ENCODE measurements at regions of chr9 and their contacts with region 1.

Region 1: GRCh38 chr9:120928483-120929228 is 2.1 kb upstream of the TRAF1 start:
- DNase-seq: peak; percentile 77 to 86
- ATAC-seq: peak; percentile 28 to 71 (median 49)
- H3K4me3 ChIP-seq: peak overlapping the region; percentile 64
- H3K4me3 Mint-ChIP-seq: peak overlapping the region; percentile 90
- H3K27ac ChIP-seq: peak overlapping the region; percentile 97
- H3K27ac Mint-ChIP-seq: peak overlapping the region; percentile 98 to 99
- H3K4me1 ChIP-seq: peaks cover 87% of the 10 kb centered on the region
- H3K4me1 Mint-ChIP-seq: peaks cover 82 to 88% of the 10 kb centered on the region in 2 donors
- H3K27me3 ChIP-seq: no peaks in the 10 kb centered on the region
- H3K27me3 Mint-ChIP-seq: no peaks in the 10 kb centered on the region
- CTCF ChIP-seq: no peak

Region 2: DNA sequence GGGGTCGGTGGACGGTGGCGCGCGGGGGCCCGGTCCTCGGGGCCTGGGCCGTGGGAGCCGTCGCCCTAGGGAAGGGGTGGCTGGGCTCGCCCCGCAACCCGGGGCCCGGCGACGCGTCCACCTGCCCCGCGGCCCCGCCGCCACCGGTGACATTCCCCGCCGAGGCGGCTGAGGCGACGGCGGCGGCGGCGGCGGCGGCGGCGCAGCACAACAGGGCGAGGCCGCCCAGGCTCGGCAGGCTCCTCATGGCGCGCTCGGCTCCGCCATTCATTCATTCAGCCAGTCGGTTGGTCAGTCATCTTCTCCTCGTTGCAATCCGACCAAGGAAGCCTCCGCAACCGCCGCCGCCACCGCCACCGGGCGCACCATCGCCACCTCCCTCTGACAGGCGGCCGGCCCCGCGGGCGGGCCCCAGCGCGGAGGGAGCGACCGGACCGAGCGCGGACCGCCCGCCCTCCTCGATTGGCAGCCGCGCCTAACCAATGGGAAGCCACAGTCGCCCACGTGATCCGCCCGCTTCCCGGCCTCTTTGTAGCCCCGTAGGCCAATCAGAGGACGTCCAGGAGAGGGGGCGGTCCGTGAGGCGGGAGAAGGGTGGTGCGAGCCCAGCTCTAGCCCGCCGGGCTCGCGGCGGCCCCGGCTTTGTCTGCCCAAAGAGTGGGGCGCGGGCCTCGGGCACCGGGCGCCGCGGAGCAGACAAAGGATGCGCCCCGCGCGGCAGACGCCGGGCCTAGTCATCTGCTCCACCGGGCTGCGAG is 214.4 kb before region 1 on chr9 and contains the start of gene MEGF9:
- intact Hi-C with region 1: loop called (anchors 5 kb)
- DNase-seq: peak; percentile 97
- ATAC-seq: peak; percentile 90 to 98 (median 95)
- H3K4me3 ChIP-seq: peak within 1 kb of the TSS; percentile 67
- H3K4me3 Mint-ChIP-seq: peak within 1 kb of the TSS; percentile 95
- H3K27ac ChIP-seq: peak within 1 kb of the TSS; percentile 64
- H3K27ac Mint-ChIP-seq: peak within 1 kb of the TSS; percentile 90 to 94
- H3K4me1 ChIP-seq: peaks cover 29% of the 10 kb centered on the region
- H3K4me1 Mint-ChIP-seq: peaks cover 24 to 35% of the 10 kb centered on the region in 2 donors
- H3K27me3 ChIP-seq: no peaks in the 10 kb centered on the region
- H3K27me3 Mint-ChIP-seq: no peaks in the 10 kb centered on the region
- CTCF ChIP-seq: no peak
- total RNA-seq, gene MEGF9: 17.5 to 25.9 (median 22.3) TPM

Region 3: GRCh38 chr9:120842690-120843499 is 85.8 kb before region 1 on chr9 and contains the start of gene PSMD5:
- intact Hi-C with region 1: loop called (anchors 5 kb)
- DNase-seq: peak; percentile 92 to 98
- ATAC-seq: peak; percentile 95 to 99 (median 97)
- H3K4me3 ChIP-seq: peak within 1 kb of the TSS; percentile 85
- H3K4me3 Mint-ChIP-seq: peak within 1 kb of the TSS; percentile 99
- H3K27ac ChIP-seq: peak within 1 kb of the TSS; percentile 92
- H3K27ac Mint-ChIP-seq: peak within 1 kb of the TSS; percentile 98 to 99
- H3K4me1 ChIP-seq: peaks cover 28% of the 10 kb centered on the region
- H3K4me1 Mint-ChIP-seq: peaks cover 57 to 58% of the 10 kb centered on the region in 2 donors
- H3K27me3 ChIP-seq: no peaks in the 10 kb centered on the region
- H3K27me3 Mint-ChIP-seq: no peaks in the 10 kb centered on the region
- CTCF ChIP-seq: no peak
- total RNA-seq, gene PSMD5: 24.6 to 41.2 (median 37.1) TPM

Region 4: DNA sequence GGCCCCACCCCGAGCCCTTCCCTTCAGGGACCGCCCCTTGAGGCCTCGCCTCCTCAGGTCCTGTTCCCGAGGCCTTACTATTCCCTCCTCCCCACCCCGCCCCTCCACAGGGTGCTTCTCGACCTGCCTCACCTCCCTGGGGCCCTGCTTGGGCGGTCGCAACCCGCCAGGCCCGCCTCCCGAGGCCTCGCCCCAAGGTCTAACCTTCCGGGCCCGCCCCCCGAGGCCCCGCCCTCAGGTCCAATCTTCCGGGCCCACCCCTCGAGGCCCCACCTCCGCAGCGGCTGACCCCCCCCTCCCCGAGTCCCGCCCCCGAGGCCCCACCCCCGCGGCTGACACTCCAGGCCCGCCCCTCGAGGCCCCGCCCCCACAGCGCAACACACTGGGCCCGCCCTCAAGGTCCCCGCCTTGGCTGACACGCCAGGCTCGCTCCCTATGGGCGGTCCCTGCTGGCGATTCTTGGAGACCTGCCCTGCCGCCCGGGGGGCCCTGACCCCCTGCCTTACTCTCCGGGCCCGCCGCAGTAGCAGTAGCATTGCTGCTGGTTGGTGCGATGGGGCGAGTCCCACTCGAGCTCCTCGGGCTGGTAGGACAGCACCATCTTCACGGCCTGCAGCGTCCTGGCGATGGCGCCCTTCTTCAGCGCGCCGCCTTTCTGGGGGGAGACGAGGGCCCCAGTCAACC is 59.8 kb before region 1 on chr9:
- intact Hi-C with region 1: loop called (anchors 2 kb)
- DNase-seq: peak; percentile 93 to 96
- ATAC-seq: peak; percentile 81 to 93 (median 83)
- H3K4me3 ChIP-seq: peak overlapping the region; percentile 68
- H3K4me3 Mint-ChIP-seq: peak overlapping the region; percentile 94
- H3K27ac ChIP-seq: peak overlapping the region; percentile 78
- H3K27ac Mint-ChIP-seq: peak overlapping the region; percentile 92 to 94
- H3K4me1 ChIP-seq: peaks cover 16% of the 10 kb centered on the region
- H3K4me1 Mint-ChIP-seq: peaks cover 4 to 22% of the 10 kb centered on the region in 2 donors
- H3K27me3 ChIP-seq: no peaks in the 10 kb centered on the region
- H3K27me3 Mint-ChIP-seq: no peaks in the 10 kb centered on the region
- CTCF ChIP-seq: peak; percentile 57

Region 5: DNA sequence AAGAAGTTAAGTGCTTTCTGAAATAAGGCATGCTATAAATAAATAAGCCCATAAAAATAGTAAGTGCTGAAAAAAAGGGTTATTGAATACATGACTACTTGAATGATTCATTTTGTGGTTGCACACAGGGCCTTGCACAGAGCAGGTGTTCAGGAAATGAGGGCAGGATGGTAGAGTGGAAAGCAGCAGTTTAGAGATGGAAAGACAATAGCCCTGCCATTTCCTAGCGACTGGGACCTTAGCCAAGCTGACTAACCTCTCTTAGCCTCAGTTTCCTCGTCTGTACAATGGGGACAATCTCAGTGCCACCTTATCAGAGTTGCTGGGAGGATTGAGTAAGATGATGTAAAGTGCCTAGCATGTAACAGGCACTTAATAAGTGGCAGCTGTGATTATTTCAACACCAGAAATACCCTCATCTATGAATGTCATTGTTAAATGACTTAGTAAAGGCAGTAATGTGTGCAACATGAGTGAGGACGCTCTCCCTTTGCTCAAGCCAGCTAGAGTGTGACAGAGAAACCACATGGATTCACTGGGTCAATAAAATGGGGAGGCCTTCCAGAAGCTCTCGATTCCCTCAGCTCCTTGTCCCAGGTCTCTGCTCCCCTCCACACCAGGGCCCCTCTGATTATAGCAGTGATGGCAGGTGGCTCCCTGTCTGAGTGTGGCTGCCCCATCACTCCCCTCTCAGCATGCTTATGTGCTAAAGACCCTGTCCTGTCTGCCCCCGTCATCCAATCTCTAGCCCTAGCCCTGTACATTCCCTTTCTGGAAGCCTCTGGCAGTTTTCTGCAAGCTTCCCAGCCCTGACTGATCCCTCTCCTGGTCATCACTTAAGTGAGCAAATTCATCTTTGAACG is 35.7 kb before region 1 on chr9:
- intact Hi-C with region 1: loop called (anchors 2 kb)
- DNase-seq: peak in 1 of 2 donors; percentile 82
- ATAC-seq: peak; percentile 63 to 88 (median 70)
- H3K4me3 ChIP-seq: no peak overlapping the region
- H3K4me3 Mint-ChIP-seq: peak overlapping the region; percentile 32
- H3K27ac ChIP-seq: peak overlapping the region; percentile 24
- H3K27ac Mint-ChIP-seq: peak overlapping the region; percentile 65 to 72
- H3K4me1 ChIP-seq: peaks cover 49% of the 10 kb centered on the region
- H3K4me1 Mint-ChIP-seq: peaks cover 15 to 24% of the 10 kb centered on the region in 2 donors
- H3K27me3 ChIP-seq: no peaks in the 10 kb centered on the region
- H3K27me3 Mint-ChIP-seq: no peaks in the 10 kb centered on the region
- CTCF ChIP-seq: no peak

Region 6: GRCh38 chr9:120944434-120944843 is 15.8 kb after region 1 on chr9:
- intact Hi-C with region 1: no loop called
- DNase-seq: no peak
- ATAC-seq: no peak
- H3K4me3 ChIP-seq: no peak overlapping the region
- H3K4me3 Mint-ChIP-seq: no peak overlapping the region
- H3K27ac ChIP-seq: no peak overlapping the region
- H3K27ac Mint-ChIP-seq: no peak overlapping the region
- H3K4me1 ChIP-seq: peaks cover 3% of the 10 kb centered on the region
- H3K4me1 Mint-ChIP-seq: no peaks in the 10 kb centered on the region
- H3K27me3 ChIP-seq: no peaks in the 10 kb centered on the region
- H3K27me3 Mint-ChIP-seq: peaks cover 0 to 9% of the 10 kb centered on the region in 2 donors
- CTCF ChIP-seq: no peak

Region 7: DNA sequence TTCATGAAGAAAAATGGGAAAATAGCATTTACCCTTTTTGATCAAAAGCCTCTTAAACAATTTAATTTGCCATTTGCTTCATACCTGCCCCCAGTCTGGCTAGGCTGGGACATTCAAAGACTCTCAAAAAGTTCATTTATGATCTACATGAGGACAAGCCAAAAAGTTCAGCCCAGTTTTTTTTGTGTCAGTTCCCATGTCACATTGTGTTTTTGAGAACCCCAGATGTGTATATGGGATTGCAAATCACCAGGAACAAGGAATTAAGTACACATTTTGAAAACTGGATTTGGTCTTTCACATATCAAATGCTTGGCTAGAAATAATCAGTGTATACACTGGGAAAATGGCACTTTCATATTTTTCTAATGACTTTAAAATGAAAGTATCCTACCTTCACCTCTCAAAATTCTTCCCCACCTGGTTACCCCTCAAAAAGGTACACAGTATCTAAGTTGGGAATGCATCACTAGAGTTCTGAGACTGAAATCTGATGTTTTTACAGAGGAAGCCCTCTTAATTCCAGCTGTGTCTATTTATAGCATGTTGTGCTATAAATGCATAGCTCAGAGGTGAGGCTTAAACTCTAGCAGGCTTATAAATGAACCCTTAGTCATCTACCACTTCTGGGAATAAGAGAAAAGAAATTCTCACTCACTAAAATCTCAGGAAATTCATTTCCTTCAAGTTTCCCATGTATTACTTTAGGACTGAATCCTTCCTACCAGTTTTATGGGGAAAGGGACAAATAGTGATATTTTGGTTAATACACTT is 432.1 kb after region 1 on chr9:
- intact Hi-C with region 1: loop called (anchors 5 kb)
- DNase-seq: no peak
- ATAC-seq: no peak
- H3K4me3 ChIP-seq: no peak overlapping the region
- H3K4me3 Mint-ChIP-seq: peak overlapping the region; percentile 65
- H3K27ac ChIP-seq: peak overlapping the region; percentile 51
- H3K27ac Mint-ChIP-seq: peak overlapping the region; percentile 93 to 94
- H3K4me1 ChIP-seq: peaks cover 39% of the 10 kb centered on the region
- H3K4me1 Mint-ChIP-seq: peaks cover 90 to 91% of the 10 kb centered on the region in 2 donors
- H3K27me3 ChIP-seq: no peaks in the 10 kb centered on the region
- H3K27me3 Mint-ChIP-seq: no peaks in the 10 kb centered on the region
- CTCF ChIP-seq: no peak

Measured in natural killer cell (primary cell).